Motor neuron (in vitro differentiated cells): ENCODE measurements at regions of chr12 and their contacts with region 1.

Region 1: DNA sequence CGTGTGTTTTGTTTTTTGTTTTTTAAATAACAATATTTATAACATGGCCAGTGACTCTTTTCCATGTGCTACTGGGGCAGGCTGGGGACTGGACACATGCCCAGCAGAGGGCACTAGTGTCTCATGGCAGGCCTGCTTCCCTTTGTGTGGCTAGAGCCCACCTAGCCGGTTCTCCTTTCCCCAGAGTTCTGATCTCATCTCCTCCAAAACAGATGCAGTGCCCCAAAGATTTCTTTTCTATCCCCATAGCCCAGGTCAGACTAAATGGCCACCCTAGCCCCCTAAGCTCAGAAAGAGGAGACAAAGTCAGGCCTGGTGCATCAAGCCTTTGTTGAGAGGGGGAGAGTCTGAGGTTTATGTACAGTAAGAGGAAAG is 21.2 kb downstream of the PRPF40B start:
- ATAC-seq: peak; percentile 75 to 95 (median 85)
- H3K4me3 ChIP-seq: no peak overlapping the region
- H3K27ac ChIP-seq: no peak overlapping the region
- H3K4me1 ChIP-seq: peaks cover 0 to 3% of the 10 kb centered on the region in 2 donors

Region 2: GRCh38 chr12:48651681-48652080 is 992.9 kb before region 1 on chr12:
- in situ Hi-C with region 1: no loop called
- ATAC-seq: no peak
- H3K4me3 ChIP-seq: no peak overlapping the region
- H3K27ac ChIP-seq: no peak overlapping the region
- H3K4me1 ChIP-seq: no peaks in the 10 kb centered on the region

Region 3: DNA sequence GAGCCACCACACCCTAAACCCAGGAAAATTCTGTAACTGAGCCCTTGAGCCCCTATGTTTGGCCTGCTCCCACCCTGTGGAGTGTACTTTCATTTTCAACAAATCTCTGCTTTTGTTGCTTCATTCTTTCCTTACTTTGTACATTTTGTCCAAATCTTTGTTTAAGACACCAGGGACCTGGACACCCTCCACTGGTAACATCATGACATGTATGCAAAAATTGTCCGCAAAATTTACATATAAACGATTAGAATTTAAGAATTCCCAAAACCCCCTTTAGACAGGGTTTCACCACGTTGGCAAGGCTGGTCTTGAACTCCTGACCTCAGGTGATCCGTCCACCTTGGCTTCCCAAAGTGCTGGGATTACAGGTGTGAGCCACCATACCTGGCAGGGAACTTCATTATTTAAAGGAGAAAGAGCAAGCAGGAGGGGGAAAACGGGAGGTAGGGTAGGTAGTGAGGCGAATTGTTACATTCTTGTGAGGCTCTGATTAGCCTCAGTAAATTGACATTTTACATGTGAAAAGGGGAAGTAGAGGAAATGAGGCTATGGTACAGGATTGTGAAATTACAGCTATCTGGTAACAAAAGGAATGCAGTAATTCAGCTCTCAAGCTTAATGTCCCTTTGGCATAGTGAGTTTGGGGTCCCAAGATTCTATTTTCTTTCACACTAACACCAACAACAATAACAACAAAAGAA is 483.4 kb before region 1 on chr12:
- in situ Hi-C with region 1: no loop called
- ATAC-seq: no peak
- H3K4me3 ChIP-seq: no peak overlapping the region
- H3K27ac ChIP-seq: no peak overlapping the region
- H3K4me1 ChIP-seq: peaks cover 7% of the 10 kb centered on the region in 2 donors

Region 4: DNA sequence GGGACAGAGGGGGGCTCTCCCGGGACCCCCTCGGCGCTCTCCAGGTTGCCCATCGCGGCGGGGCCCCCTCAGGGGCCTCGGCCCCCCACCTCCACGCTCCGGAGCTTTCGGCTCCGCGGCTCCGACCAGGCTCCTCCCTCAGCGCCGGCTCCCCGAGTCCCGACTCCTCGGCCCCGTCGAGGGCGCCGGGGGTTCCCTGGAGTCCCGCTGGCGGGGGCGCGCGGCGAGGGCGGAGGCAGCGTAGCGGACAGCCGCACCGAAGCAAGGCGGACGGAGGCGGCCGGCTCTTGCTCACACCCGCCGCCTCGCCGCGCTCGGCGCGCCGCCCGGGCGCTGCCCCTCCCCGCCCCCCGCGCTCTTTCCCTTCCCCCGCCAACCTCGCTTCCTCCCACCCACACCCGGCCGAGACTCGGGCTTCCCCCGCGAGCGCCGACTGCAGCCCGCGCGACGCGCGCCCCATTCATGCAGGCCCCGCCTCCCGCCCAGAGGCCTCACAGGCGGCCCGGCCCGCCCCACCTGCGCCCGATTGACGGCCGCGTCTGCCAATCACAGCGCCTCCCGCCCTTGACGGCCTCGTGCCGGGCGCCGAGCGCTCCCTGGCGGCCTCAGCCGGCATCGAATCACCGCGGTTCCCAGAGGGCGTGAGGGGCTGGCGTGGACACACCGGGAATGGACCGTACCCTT is 62.7 kb after region 1 on chr12 and contains the start of gene FMNL3:
- in situ Hi-C with region 1: loop called in 1 of 9 experiments (anchors 10 kb)
- ATAC-seq: peak; percentile 91 to 96 (median 94)
- H3K4me3 ChIP-seq: peak within 1 kb of the TSS; percentile 63 to 98 (median 73)
- H3K27ac ChIP-seq: peak within 1 kb of the TSS; percentile 42 to 85
- H3K4me1 ChIP-seq: peaks cover 7 to 11% of the 10 kb centered on the region in 2 donors
- total RNA-seq, gene FMNL3: 3.1 to 9.0 (median 5.1) TPM